ENCODE measurements at regions of chr18 and their contacts with region 1.

Region 1: DNA sequence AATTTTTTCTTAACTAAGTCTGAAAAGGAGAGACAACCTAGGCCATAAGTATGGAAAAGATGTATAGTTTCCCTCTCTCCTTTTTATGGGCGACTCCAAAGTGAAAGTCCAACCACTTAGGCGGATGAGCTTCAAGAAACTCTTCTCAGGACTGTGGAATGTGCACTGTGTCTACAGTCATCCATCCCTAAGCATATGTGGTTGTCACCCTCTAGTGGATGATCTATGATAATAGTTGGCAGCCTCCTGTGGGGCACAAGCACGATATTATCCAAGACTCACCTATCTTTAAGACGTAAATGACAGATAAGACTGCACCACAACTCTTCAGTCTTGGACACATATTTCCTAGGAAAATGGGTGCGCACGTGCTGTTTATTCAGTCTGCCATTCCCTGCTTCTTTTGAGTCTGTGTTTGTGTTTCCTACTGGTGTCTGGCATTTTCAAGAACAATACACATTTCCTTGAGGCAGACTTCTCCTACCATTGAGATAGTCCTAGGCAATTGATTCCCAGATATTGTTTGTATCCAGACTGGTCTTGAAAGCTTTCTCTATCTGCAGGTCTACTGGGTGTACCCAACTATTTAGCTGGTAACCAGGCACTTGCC is 145.5 kb upstream of the CTAGE1 start:
- DNase-seq: no peak
- ATAC-seq: peak; percentile 76

Region 2: DNA sequence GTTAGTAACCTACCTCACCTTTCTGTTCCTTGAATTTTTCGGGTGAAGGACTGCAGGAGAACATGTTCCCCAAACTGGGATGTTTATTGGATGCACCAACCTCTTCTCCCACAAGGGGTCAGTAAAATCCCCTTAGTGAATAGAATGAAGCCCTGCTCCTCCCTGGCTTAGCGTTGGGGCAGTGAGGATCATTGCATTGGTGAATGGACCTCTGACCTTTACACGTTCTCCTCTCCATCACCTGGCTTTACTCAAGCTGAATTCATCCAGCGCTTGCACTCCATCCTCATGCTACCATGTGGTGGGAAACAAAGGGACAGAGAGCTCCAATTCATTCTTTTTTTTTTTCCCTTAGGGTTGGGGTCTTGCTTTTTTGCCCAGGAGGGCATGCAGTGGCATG is 665.4 kb before region 1 on chr18:
- intact Hi-C with region 1: loop called (anchors 5 kb)
- DNase-seq: no peak
- ATAC-seq: peak; percentile 61

Region 3: GRCh38 chr18:21997207-21998143 is 565.7 kb before region 1 on chr18:
- intact Hi-C with region 1: loop called (anchors 2 kb)
- DNase-seq: no peak
- ATAC-seq: peak; percentile 63

Region 4: GRCh38 chr18:22282311-22283112 is 280.7 kb before region 1 on chr18:
- intact Hi-C with region 1: loop called (anchors 5 kb)
- DNase-seq: no peak
- ATAC-seq: no peak

Region 5: GRCh38 chr18:22363867-22364463 is 199.2 kb before region 1 on chr18:
- intact Hi-C with region 1: loop called (anchors 5 kb)
- DNase-seq: no peak
- ATAC-seq: peak; percentile 61

Region 6: GRCh38 chr18:22471546-22472131 is 91.6 kb before region 1 on chr18:
- intact Hi-C with region 1: loop called (anchors 1 kb)
- DNase-seq: peak; percentile 81
- ATAC-seq: peak; percentile 94

Measured in Right ventricle myocardium inferior (tissue), 1 donor.